Heart right ventricle (tissue), 16 donors: ENCODE measurements at regions of chr19 and their contacts with region 1.

Region 1: GRCh38 chr19:2977001-2977685 is at the start of gene TLE6:
- DNase-seq: peak; percentile 96 to 97
- ATAC-seq: peak; percentile 94 to 97 (median 96)
- H3K4me3 ChIP-seq: peak within 1 kb of the TSS; percentile 30 to 63 (median 54)
- H3K27ac ChIP-seq: peak within 1 kb of the TSS in 9 of 10 donors; percentile 25 to 68 (median 51)
- H3K4me1 ChIP-seq: peaks cover 20 to 63% (median 57%) of the 10 kb centered on the region in 9 donors
- H3K27me3 ChIP-seq: no peaks in the 10 kb centered on the region
- CTCF ChIP-seq: no peak
- total RNA-seq, gene TLE6: 0.34 to 2.8 (median 0.45) TPM in 7 of 10 donors, not detected in the others

Region 2: DNA sequence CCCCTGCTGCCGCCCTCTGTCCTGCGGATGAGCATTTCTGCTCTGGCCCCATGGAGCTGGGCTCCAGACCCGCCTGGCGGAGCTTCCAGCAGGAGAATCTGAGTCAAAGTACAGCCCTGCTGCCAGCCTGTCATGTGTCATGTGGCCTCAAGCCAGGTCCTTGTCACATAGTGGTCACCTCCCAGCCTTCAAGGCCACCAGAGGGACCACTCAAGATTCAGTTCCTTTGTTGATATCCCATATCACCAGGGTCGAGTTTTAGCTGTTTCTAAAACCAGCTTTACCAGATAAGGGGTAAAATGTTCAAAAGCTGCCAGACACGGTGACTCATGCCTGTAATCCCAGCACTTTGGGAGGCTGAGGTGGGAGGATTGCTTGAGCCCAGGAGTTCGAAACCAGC is 178.4 kb before region 1 on chr19:
- intact Hi-C with region 1: no loop called
- DNase-seq: peak; percentile 70 to 79
- ATAC-seq: peak; percentile 65 to 83 (median 78)
- H3K4me3 ChIP-seq: no peak overlapping the region
- H3K27ac ChIP-seq: peak overlapping the region; percentile 35 to 89 (median 78)
- H3K4me1 ChIP-seq: peaks cover 0 to 28% (median 19%) of the 10 kb centered on the region in 9 donors
- H3K27me3 ChIP-seq: no peaks in the 10 kb centered on the region
- CTCF ChIP-seq: peak in 1 of 9 donors; percentile 18

Region 3: GRCh38 chr19:2867025-2867991 is 109.8 kb before region 1 on chr19 and contains the start of gene ZNF556:
- intact Hi-C with region 1: no loop called
- DNase-seq: no peak
- ATAC-seq: peak in 3 of 8 donors; percentile 35 to 58 (median 42)
- H3K4me3 ChIP-seq: no peak within 1 kb of the TSS
- H3K27ac ChIP-seq: no peak within 1 kb of the TSS
- H3K4me1 ChIP-seq: no peaks in the 10 kb centered on the region
- H3K27me3 ChIP-seq: no peaks in the 10 kb centered on the region
- CTCF ChIP-seq: no peak
- total RNA-seq, gene ZNF556: 0.03 to 0.04 TPM in 2 of 10 donors, not detected in the others

Region 4: GRCh38 chr19:3029065-3029923 is 52.2 kb after region 1 on chr19 and contains the start of gene TLE2:
- intact Hi-C with region 1: loop called in 5 of 10 experiments (anchors 2 to 10 kb)
- DNase-seq: no peak
- ATAC-seq: peak in 5 of 8 donors; percentile 40 to 68 (median 44)
- H3K4me3 ChIP-seq: peak within 1 kb of the TSS; percentile 59 to 80 (median 69)
- H3K27ac ChIP-seq: peak within 1 kb of the TSS in 8 of 10 donors; percentile 30 to 85 (median 66)
- H3K4me1 ChIP-seq: peaks cover 0 to 22% (median 13%) of the 10 kb centered on the region in 9 donors
- H3K27me3 ChIP-seq: peaks cover 0 to 59% (median 0%) of the 10 kb centered on the region in 7 donors
- CTCF ChIP-seq: no peak
- total RNA-seq, gene TLE2: 28.2 to 64.5 (median 39.9) TPM

Region 5: GRCh38 chr19:3046698-3047424 is 69.7 kb after region 1 on chr19:
- intact Hi-C with region 1: no loop called
- DNase-seq: peak; percentile 44 to 47
- ATAC-seq: peak in 5 of 8 donors; percentile 11 to 50 (median 27)
- H3K4me3 ChIP-seq: peak overlapping the region; percentile 10 to 52 (median 42)
- H3K27ac ChIP-seq: peak overlapping the region in 8 of 10 donors; percentile 2 to 78 (median 46)
- H3K4me1 ChIP-seq: peaks cover 0 to 22% (median 10%) of the 10 kb centered on the region in 9 donors
- H3K27me3 ChIP-seq: peaks cover 0 to 14% (median 0%) of the 10 kb centered on the region in 7 donors
- CTCF ChIP-seq: no peak

Region 6: GRCh38 chr19:3094601-3095437 is 117.7 kb after region 1 on chr19:
- intact Hi-C with region 1: loop called in 1 of 10 experiments (anchors 5 kb)
- DNase-seq: no peak
- ATAC-seq: no peak
- H3K4me3 ChIP-seq: peak overlapping the region; percentile 86 to 100 (median 98)
- H3K27ac ChIP-seq: peak overlapping the region; percentile 5 to 95 (median 90)
- H3K4me1 ChIP-seq: peaks cover 29 to 51% (median 47%) of the 10 kb centered on the region in 9 donors
- H3K27me3 ChIP-seq: peaks cover 0 to 32% (median 0%) of the 10 kb centered on the region in 7 donors
- CTCF ChIP-seq: no peak